ENCODE measurements at regions of chr12 and their contacts with region 1.

Region 1: DNA sequence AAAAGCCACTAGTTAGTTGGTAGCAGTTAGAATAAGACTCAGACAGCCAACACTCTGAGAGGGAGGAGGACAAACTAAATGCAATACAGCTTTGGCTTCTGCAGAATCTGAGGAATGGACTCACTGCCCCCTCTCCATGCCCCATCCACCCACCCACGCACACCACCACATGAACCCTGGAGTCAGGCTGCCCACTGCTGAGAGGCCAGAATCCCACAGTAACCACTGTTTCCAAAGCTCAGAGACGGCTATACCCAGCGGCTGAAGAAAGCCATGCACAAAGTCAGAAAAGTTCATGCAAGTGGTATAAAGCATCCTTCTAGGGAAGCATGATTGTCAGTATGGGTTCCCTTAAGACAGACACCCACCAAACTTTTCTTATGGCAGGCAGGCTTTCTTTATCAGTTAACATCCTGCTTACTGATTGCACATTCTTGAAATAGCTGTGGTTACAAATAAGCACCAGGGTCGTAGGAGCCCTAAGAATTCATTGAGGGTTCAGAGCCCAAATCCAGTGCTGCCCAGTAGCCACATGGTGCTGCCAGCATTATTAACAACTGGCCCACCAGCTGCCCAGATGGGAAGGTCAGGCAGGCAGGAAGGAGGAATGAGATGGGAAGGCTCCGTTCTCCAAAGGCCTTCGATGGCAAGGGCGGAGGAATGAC is 61.5 kb downstream of the NT5DC3 start:
- DNase-seq: no peak
- H3K4me3 Mint-ChIP-seq: no peak overlapping the region
- H3K27ac Mint-ChIP-seq: no peak overlapping the region
- H3K4me1 Mint-ChIP-seq: no peaks in the 10 kb centered on the region
- H3K27me3 Mint-ChIP-seq: no peaks in the 10 kb centered on the region
- CTCF ChIP-seq: no peak

Region 2: DNA sequence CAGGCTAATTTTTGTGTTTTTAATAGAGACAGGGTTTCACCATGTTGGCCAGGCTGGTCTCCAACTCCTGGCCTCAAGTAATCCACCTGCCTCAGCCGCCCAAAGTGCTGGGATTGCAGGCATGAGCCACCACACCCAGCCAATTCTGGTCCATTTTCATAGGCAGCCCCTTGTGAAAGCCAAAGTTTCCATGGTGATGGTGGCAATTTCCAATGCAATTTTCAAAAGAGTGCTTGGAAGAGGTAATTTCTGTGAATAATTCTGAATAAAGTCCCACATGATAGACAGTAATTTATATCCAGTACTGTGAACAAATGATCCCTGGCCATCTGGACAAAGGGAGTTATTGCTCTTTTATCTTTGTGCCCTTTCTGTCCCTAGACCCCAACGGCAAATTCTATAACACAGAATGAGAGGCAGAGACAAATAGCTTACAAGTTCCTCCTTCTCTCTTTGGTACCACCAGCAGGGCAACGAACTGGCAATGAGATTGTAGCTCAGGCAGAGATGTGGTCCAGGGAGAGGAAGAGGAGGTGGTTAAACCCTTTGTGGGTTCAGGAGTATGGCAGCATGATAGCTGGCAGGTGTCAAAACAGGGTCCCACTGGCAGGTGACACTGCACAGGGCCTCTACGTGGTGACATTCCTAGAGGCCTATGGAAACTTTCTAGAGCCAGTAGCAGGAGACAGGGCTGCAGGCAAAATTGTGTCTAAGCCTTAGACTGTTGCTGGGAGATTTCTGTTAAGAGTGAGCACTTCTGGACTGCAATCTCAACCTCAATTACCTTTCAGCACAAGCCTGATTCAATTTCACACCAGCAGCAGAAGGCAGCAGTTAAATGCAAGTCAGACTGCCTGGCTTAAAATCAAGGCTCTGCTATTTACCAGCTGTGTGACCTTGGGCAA is 15.0 kb after region 1 on chr12:
- CTCF ChIA-PET with region 1: interaction called, 11 read pairs
- POLR2A ChIA-PET with region 1: no interaction called
- intact Hi-C with region 1: no loop called
- DNase-seq: no peak
- H3K4me3 Mint-ChIP-seq: no peak overlapping the region
- H3K27ac Mint-ChIP-seq: no peak overlapping the region
- H3K4me1 Mint-ChIP-seq: peaks cover 5% of the 10 kb centered on the region
- H3K27me3 Mint-ChIP-seq: no peaks in the 10 kb centered on the region
- CTCF ChIP-seq: no peak

Measured in MCF 10A (cell line).